Activated B cell treated with CpG ODN at 0.5 μM for 24 hours (primary cell): ENCODE measurements at regions of chr18 and their contacts with region 1.

Region 1: DNA sequence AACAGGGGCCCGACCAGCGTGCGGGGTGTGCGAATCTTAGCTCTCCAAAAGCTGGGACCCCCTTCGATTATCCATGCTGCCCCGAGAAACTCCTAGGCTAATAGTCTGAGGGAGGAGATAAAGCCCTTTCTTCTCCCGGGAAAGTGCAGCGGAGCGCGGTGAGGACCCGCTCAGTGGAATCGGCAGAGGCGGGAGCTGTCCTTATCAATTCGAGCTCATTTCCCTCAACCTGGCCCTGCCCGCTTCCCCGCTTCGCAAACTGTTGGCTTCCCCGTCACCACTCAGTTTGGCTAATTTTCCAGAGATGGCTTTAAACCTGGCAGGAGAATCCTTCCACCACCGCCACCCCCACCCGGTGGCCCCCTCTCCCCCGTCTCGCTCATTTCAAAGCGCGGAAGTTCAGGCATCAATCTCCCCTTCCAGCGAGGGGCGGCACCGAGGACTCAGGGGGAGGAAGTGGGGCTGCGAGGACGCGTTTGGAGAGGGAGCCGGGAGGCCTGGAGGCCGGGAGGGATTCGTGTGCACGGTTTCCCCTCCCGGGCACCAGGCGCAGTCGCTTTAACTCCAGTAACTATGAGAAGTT is 1.6 kb downstream of the KLHL14 start:
- DNase-seq: peak; percentile 46
- ATAC-seq: peak; percentile 22
- H3K4me3 Mint-ChIP-seq: peak overlapping the region; percentile 96
- H3K27ac Mint-ChIP-seq: peak overlapping the region; percentile 86
- H3K4me1 Mint-ChIP-seq: peaks cover 60% of the 10 kb centered on the region
- H3K27me3 Mint-ChIP-seq: no peaks in the 10 kb centered on the region
- CTCF ChIP-seq: no peak

Region 2: GRCh38 chr18:32714571-32715148 is 56.6 kb before region 1 on chr18:
- CTCF ChIA-PET with region 1: interaction called, 19 read pairs
- POLR2A ChIA-PET with region 1: interaction called, 11 read pairs
- intact Hi-C with region 1: loop called (anchors 1 kb)
- DNase-seq: no peak
- ATAC-seq: peak; percentile 98
- H3K4me3 Mint-ChIP-seq: no peak overlapping the region
- H3K27ac Mint-ChIP-seq: no peak overlapping the region
- H3K4me1 Mint-ChIP-seq: peaks cover 22% of the 10 kb centered on the region
- H3K27me3 Mint-ChIP-seq: no peaks in the 10 kb centered on the region
- CTCF ChIP-seq: peak; percentile 44

Region 3: GRCh38 chr18:32760391-32760790 is 10.9 kb before region 1 on chr18:
- CTCF ChIA-PET with region 1: interaction called, 12 read pairs
- POLR2A ChIA-PET with region 1: interaction called, 75 read pairs
- intact Hi-C with region 1: loop called (anchors 1 kb)
- DNase-seq: peak; percentile 57
- ATAC-seq: peak; percentile 97
- H3K4me3 Mint-ChIP-seq: peak overlapping the region; percentile 60
- H3K27ac Mint-ChIP-seq: peak overlapping the region; percentile 83
- H3K4me1 Mint-ChIP-seq: peaks cover 93% of the 10 kb centered on the region
- H3K27me3 Mint-ChIP-seq: no peaks in the 10 kb centered on the region
- CTCF ChIP-seq: no peak

Region 4: GRCh38 chr18:32840962-32841361 is 69.7 kb after region 1 on chr18:
- CTCF ChIA-PET with region 1: no interaction called
- POLR2A ChIA-PET with region 1: interaction called, 12 read pairs
- intact Hi-C with region 1: no loop called
- DNase-seq: no peak
- ATAC-seq: no peak
- H3K4me3 Mint-ChIP-seq: no peak overlapping the region
- H3K27ac Mint-ChIP-seq: no peak overlapping the region
- H3K4me1 Mint-ChIP-seq: no peaks in the 10 kb centered on the region
- H3K27me3 Mint-ChIP-seq: no peaks in the 10 kb centered on the region
- CTCF ChIP-seq: no peak

Region 5: GRCh38 chr18:32879497-32879896 is 108.2 kb after region 1 on chr18:
- CTCF ChIA-PET with region 1: interaction called, 3 read pairs
- POLR2A ChIA-PET with region 1: interaction called, 43 read pairs
- intact Hi-C with region 1: loop called (anchors 1 kb)
- DNase-seq: no peak
- ATAC-seq: no peak
- H3K4me3 Mint-ChIP-seq: no peak overlapping the region
- H3K27ac Mint-ChIP-seq: peak overlapping the region; percentile 89
- H3K4me1 Mint-ChIP-seq: peaks cover 84% of the 10 kb centered on the region
- H3K27me3 Mint-ChIP-seq: no peaks in the 10 kb centered on the region
- CTCF ChIP-seq: no peak

Region 6: DNA sequence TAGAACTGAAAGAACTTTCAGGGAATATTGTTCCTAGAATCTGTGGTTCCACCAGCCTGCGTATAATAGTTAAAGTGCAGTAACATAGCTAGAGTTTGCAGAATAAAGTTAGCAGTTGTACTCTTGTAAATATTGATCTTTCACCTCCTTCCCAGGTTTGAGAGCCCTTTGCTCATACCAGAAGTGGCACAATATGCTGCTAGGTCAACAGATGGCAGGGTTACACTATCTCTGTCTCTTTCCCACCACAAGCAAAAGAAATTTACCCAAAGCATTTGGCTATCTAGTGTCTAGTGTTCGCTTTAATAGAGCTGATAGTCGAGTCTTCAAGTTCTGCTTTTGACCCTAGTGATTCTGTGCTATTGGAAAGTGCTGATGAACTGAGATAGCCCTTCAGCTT is 120.5 kb after region 1 on chr18:
- CTCF ChIA-PET with region 1: interaction called, 10 read pairs
- POLR2A ChIA-PET with region 1: interaction called, 43 read pairs
- intact Hi-C with region 1: no loop called
- DNase-seq: no peak
- ATAC-seq: peak; percentile 40
- H3K4me3 Mint-ChIP-seq: no peak overlapping the region
- H3K27ac Mint-ChIP-seq: no peak overlapping the region
- H3K4me1 Mint-ChIP-seq: peaks cover 37% of the 10 kb centered on the region
- H3K27me3 Mint-ChIP-seq: no peaks in the 10 kb centered on the region
- CTCF ChIP-seq: no peak

Region 7: GRCh38 chr18:32937007-32937540 is 165.8 kb after region 1 on chr18:
- CTCF ChIA-PET with region 1: no interaction called
- POLR2A ChIA-PET with region 1: no interaction called
- intact Hi-C with region 1: no loop called
- DNase-seq: no peak
- ATAC-seq: no peak
- H3K4me3 Mint-ChIP-seq: no peak overlapping the region
- H3K27ac Mint-ChIP-seq: no peak overlapping the region
- H3K4me1 Mint-ChIP-seq: no peaks in the 10 kb centered on the region
- H3K27me3 Mint-ChIP-seq: no peaks in the 10 kb centered on the region
- CTCF ChIP-seq: no peak